GM18951 (cell line): ENCODE measurements at regions of chr17 and their contacts with region 1.

Region 1: GRCh38 chr17:59004338-59005111 is 102.2 kb downstream of the TRIM37 start:
- POLR2A ChIP-seq: no peak

Region 2: DNA sequence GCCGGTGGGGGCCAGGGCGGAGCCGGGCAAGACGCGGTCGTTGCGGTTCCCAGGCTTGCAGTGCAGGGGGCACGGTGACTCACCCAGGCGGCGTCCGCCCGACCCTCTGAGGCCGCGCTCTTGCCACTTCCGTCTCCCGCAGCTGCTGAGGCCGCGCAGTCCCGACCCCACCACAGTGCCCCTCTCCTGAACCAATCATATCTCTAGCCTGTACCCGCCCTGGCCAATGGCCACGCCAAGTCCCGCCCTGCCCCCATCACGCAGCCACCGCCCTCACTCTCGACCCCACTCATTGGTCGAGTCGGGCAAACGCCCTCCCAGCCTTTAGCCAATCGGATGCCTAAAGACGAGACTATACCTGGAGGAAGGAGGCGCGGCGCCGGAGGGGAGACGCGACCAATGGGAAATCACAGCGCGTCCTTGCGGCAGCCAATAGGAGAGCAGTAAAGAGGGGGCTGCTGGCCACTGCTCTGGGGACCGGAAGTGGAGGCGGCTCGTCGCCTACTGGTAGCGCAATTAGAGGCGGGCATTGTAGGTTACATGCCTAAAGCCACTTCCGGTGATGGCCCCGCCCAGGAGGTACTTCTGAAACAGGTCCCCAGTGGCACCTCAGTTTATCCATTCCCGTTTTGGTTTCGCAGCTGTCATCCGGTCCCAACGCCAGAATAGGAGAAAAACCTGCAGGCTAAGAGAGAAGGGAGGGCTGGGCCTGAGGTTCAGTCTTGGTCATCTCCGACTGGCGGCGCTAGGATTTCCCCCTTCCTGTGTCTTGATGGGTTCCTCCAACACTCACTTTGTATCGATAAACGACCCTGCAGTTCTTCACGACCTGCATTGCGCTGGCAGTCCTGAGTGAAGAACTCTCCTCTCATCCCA is 486.6 kb before region 1 on chr17:
- in situ Hi-C with region 1: loop called (anchors 10 kb)
- POLR2A ChIP-seq: peak; percentile 75

Region 3: DNA sequence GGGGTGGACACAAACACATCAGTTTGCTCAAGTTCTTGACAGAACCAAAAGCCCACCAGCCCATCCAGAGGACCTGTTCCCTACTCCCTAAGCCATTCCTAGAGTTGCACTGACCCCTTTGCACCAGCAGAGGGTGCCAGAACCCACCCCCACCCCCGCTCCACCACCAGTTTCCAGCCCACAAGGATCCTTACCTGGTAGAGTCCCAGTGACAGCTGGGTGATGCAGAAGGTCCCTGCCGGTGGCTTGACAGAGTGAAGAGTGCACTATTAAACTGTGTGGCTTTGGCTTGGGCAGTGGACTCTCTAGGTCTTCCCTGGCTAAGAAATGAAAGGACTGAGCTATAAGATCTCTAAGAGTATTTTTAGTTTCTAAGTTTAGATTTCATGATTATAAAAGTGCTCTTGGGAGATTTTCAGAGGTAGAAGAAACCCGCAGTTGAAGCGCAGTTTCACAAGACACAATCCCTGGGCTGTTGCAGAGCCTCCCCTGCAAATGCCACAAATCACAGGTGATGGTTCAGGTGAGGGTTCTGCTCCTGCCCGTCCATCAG is 416.7 kb before region 1 on chr17:
- in situ Hi-C with region 1: loop called (anchors 10 kb)
- POLR2A ChIP-seq: no peak

Region 4: GRCh38 chr17:59707114-59707970 is 702.8 kb after region 1 on chr17 and contains the starts of genes PTRH2 and VMP1:
- in situ Hi-C with region 1: no loop called
- POLR2A ChIP-seq: peak; percentile 93